Activated T-helper 1 cell treated with anti-CD3 and anti-CD28 coated beads, Interleukin-12 subunit alpha, Interleukin-12 subunit beta, Interleukin-2, Interleukin-4 antibody, amounts not matched to agents 30 ng/mL and 10 ng/mL and 1 ng/mL, durations not matched to agents 14 hours and 24 hours and 36 hours (primary cell): ENCODE measurements at regions of chr16 and their contacts with region 1.

Region 1: DNA sequence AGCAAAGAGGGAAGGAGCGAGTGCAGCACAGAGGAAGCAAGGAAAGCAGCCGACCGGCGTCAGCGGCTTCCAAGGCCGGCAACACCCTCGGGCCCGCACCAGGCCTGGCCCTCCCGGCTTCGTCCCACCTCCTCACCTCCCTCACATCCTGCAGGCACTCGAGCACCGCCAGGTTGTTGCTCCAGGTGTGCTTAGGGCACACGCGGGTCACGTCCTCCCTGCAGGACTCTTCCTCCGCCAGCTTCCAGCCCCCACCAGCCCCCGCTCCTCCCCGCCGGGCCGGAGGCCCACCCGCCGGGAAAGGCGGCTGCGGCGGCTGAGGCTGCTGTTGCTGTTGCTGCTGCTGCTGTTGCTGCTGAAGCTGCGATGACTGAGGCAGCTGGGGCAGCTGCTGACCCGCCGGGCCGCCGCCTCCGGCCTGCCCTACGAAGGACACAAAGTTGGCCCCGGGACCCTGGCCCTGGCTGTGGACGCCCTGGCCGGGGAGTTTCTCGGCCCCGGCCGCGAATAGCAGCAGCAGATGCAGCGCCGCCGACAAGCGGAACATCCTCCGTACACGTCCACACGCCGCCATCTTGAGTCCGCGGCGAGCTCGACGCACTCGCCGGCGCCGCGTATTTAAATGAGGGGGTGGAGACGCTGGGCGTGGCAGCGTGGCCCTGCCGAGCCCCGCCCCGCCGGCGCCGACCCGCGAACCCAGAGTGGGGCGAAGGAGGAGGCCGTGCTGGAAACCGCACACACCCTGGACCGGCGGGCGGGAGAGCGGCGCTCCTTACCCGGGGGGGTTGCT is at the start of gene GLG1:
- DNase-seq: peak; percentile 89
- H3K4me3 Mint-ChIP-seq: peak within 1 kb of the TSS; percentile 92
- H3K27ac Mint-ChIP-seq: peak within 1 kb of the TSS; percentile 92
- H3K4me1 Mint-ChIP-seq: peaks cover 64% of the 10 kb centered on the region
- H3K27me3 Mint-ChIP-seq: no peaks in the 10 kb centered on the region
- total RNA-seq, gene GLG1: 66.5 and 71.8 TPM in 2 replicates

Region 2: DNA sequence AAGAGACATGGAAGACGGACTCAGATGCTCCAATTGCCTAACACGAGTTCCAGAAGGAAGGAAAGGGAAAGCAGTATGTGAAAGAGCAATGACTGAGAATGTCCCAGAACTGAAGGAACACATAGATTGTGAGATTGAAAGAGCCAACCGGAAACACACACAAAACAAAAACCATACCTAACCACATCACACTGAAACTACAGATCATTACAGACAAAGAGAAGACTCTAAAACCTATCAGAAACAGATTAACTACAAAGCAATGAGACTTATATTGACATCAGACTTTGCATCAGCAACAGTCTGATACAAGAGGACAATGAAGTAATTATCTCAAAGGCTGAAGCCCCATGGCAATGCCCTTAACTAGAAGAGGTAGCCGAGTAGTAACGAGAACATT is 139.8 kb before region 1 on chr16:
- intact Hi-C with region 1: loop called (anchors 1 kb)
- DNase-seq: no peak
- H3K4me3 Mint-ChIP-seq: peak overlapping the region; percentile 21
- H3K27ac Mint-ChIP-seq: peak overlapping the region; percentile 29
- H3K4me1 Mint-ChIP-seq: peaks cover 25% of the 10 kb centered on the region
- H3K27me3 Mint-ChIP-seq: no peaks in the 10 kb centered on the region

Region 3: GRCh38 chr16:74623214-74623842 is 16.6 kb after region 1 on chr16:
- intact Hi-C with region 1: loop called (anchors 1 kb)
- DNase-seq: no peak
- H3K4me3 Mint-ChIP-seq: no peak overlapping the region
- H3K27ac Mint-ChIP-seq: no peak overlapping the region
- H3K4me1 Mint-ChIP-seq: peaks cover 39% of the 10 kb centered on the region
- H3K27me3 Mint-ChIP-seq: no peaks in the 10 kb centered on the region

Region 4: GRCh38 chr16:74771656-74772315 is 165.1 kb after region 1 on chr16:
- intact Hi-C with region 1: no loop called
- DNase-seq: no peak
- H3K4me3 Mint-ChIP-seq: no peak overlapping the region
- H3K27ac Mint-ChIP-seq: no peak overlapping the region
- H3K4me1 Mint-ChIP-seq: peaks cover 17% of the 10 kb centered on the region
- H3K27me3 Mint-ChIP-seq: peaks cover 49% of the 10 kb centered on the region

Region 5: DNA sequence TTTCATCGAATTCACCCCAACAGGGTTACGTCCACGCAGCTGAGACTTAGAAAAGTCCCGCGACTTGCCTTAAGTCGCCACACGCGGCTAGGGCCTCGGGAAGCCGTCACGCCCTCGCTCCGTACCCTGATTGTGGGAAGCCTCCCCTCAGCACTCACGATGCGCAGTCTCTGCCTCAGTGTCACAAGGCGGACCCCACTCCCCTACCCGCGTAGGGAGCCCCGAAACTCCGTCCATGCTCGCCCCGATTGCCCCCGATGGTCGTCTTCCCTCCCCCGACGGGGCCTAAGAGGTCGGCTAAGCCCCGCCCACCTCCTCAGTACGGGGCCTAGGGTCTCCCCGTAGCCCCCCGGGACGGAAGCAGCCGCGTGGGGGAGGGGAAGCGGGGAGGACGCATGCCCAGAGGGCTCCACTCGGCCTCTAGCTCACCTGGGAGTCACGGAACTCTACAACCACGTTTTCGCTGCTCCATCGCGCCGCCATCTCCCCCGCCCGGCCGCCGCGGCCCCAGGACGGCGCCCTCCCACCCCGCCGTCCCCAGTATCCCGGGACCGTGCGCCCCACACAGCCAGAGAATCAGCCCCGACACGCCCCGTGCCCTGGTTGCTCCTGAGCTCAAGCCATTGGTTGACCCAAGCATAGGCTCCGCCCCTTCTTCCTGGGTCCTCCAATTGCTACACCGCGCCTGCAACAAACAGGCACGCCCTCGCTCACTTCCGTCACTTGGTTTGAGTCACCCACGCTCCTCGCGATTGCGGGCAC is 378.0 kb after region 1 on chr16 and contains the start of gene WDR59:
- intact Hi-C with region 1: loop called (anchors 1 kb)
- DNase-seq: peak; percentile 99
- H3K4me3 Mint-ChIP-seq: peak within 1 kb of the TSS; percentile 90
- H3K27ac Mint-ChIP-seq: peak within 1 kb of the TSS; percentile 90
- H3K4me1 Mint-ChIP-seq: peaks cover 14% of the 10 kb centered on the region
- H3K27me3 Mint-ChIP-seq: peaks cover 3% of the 10 kb centered on the region
- total RNA-seq, gene WDR59: 85.9 and 95.3 TPM in 2 replicates

Region 6: GRCh38 chr16:75519881-75520280 is 913.2 kb after region 1 on chr16:
- intact Hi-C with region 1: loop called (anchors 5 kb)
- DNase-seq: no peak
- H3K4me3 Mint-ChIP-seq: no peak overlapping the region
- H3K27ac Mint-ChIP-seq: no peak overlapping the region
- H3K4me1 Mint-ChIP-seq: peaks cover 5% of the 10 kb centered on the region
- H3K27me3 Mint-ChIP-seq: peaks cover 5% of the 10 kb centered on the region